ENCODE measurements at regions of chr2 and their contacts with region 1.

Region 1: GRCh38 chr2:148989882-148990493 is 48.5 kb upstream of the LYPD6B start:
- DNase-seq: peak in 8 of 9 experiments; percentile 4 to 75 (median 44)
- ATAC-seq: peak; percentile 95
- H3K4me3 ChIP-seq: no peak overlapping the region
- H3K4me3 Mint-ChIP-seq: no peak overlapping the region
- H3K27ac ChIP-seq: no peak overlapping the region
- H3K27ac Mint-ChIP-seq: no peak overlapping the region
- H3K4me1 ChIP-seq: no peaks in the 10 kb centered on the region
- H3K4me1 Mint-ChIP-seq: peaks cover 4% of the 10 kb centered on the region
- H3K27me3 ChIP-seq: no peaks in the 10 kb centered on the region
- H3K27me3 Mint-ChIP-seq: no peaks in the 10 kb centered on the region
- CTCF ChIP-seq: peak; percentile 78

Region 2: GRCh38 chr2:147937744-147938349 is 1052.1 kb before region 1 on chr2:
- CTCF ChIA-PET with region 1: interaction called, 6 read pairs
- POLR2A ChIA-PET with region 1: no interaction called
- intact Hi-C with region 1: loop called (anchors 1 kb)
- DNase-seq: peak in 2 of 9 experiments; percentile 36 to 52
- ATAC-seq: peak; percentile 40
- H3K4me3 ChIP-seq: no peak overlapping the region
- H3K4me3 Mint-ChIP-seq: no peak overlapping the region
- H3K27ac ChIP-seq: no peak overlapping the region
- H3K27ac Mint-ChIP-seq: peak overlapping the region; percentile 32
- H3K4me1 ChIP-seq: no peaks in the 10 kb centered on the region
- H3K4me1 Mint-ChIP-seq: no peaks in the 10 kb centered on the region
- H3K27me3 ChIP-seq: no peaks in the 10 kb centered on the region
- H3K27me3 Mint-ChIP-seq: no peaks in the 10 kb centered on the region
- CTCF ChIP-seq: peak; percentile 97

Region 3: GRCh38 chr2:147989809-147990403 is 1000.1 kb before region 1 on chr2:
- CTCF ChIA-PET with region 1: interaction called, 9 read pairs
- POLR2A ChIA-PET with region 1: no interaction called
- intact Hi-C with region 1: loop called (anchors 1 kb)
- DNase-seq: peak in 4 of 9 experiments; percentile 29 to 70 (median 45)
- ATAC-seq: peak; percentile 92
- H3K4me3 ChIP-seq: no peak overlapping the region
- H3K4me3 Mint-ChIP-seq: no peak overlapping the region
- H3K27ac ChIP-seq: no peak overlapping the region
- H3K27ac Mint-ChIP-seq: peak overlapping the region; percentile 11
- H3K4me1 ChIP-seq: no peaks in the 10 kb centered on the region
- H3K4me1 Mint-ChIP-seq: peaks cover 26% of the 10 kb centered on the region
- H3K27me3 ChIP-seq: no peaks in the 10 kb centered on the region
- H3K27me3 Mint-ChIP-seq: no peaks in the 10 kb centered on the region
- CTCF ChIP-seq: peak; percentile 99

Region 4: DNA sequence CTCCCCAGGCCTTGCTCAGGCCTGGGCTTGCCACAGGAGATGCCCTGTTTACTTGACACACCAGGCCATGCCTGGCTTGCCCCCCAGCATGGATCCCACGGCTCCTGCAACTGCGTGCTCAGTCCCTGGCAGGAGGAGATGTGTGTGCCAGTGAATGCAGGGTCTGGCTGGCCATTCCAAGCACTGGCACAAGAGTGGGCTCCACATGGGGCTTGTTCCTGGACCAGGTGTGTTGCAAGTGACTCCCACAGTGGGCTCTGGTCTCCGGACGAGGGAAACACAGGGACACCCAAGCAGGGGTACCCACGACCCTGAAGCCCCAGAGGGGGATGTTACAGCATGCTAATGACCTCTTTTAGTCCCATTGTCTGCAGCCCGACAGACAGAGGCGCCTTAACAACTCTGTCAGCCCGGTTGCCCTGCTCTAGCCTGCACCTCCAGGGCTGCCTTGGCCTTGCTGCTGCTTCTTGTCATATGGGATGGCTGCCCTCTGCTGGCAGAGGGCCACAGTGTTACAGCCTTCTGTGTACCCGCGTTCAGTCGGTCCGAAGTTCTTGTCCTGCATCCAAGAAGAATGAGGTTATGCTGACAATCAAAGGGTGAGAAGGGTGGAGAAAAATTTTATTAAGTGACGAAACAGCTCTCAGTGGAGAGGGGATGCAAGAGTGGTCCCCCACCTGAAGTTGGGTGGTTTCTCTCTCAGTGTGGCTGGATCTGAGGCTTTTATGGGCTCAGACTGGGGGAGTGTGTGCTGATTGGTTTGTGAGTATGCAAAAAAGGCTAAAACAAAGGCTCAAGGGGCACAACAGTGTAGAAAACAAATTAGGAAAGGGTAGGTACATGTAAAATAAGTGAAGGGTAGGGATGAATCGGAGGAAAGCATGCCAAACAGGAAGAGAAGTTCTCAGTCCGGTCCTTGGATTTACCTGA is 788.6 kb before region 1 on chr2:
- CTCF ChIA-PET with region 1: no interaction called
- POLR2A ChIA-PET with region 1: no interaction called
- intact Hi-C with region 1: loop called in 1 of 2 experiments (anchors 10 kb)
- DNase-seq: peak in 7 of 9 experiments; percentile 2 to 58 (median 26)
- ATAC-seq: no peak
- H3K4me3 ChIP-seq: no peak overlapping the region
- H3K4me3 Mint-ChIP-seq: no peak overlapping the region
- H3K27ac ChIP-seq: no peak overlapping the region
- H3K27ac Mint-ChIP-seq: no peak overlapping the region
- H3K4me1 ChIP-seq: no peaks in the 10 kb centered on the region
- H3K4me1 Mint-ChIP-seq: peaks cover 4% of the 10 kb centered on the region
- H3K27me3 ChIP-seq: no peaks in the 10 kb centered on the region
- H3K27me3 Mint-ChIP-seq: no peaks in the 10 kb centered on the region
- CTCF ChIP-seq: peak; percentile 23

Region 5: GRCh38 chr2:148565272-148565894 is 424.6 kb before region 1 on chr2:
- CTCF ChIA-PET with region 1: no interaction called
- POLR2A ChIA-PET with region 1: no interaction called
- intact Hi-C with region 1: loop called in 1 of 2 experiments (anchors 5 kb)
- DNase-seq: no peak
- ATAC-seq: no peak
- H3K4me3 ChIP-seq: no peak overlapping the region
- H3K4me3 Mint-ChIP-seq: no peak overlapping the region
- H3K27ac ChIP-seq: no peak overlapping the region
- H3K27ac Mint-ChIP-seq: no peak overlapping the region
- H3K4me1 ChIP-seq: peaks cover 8% of the 10 kb centered on the region
- H3K4me1 Mint-ChIP-seq: peaks cover 14% of the 10 kb centered on the region
- H3K27me3 ChIP-seq: no peaks in the 10 kb centered on the region
- H3K27me3 Mint-ChIP-seq: no peaks in the 10 kb centered on the region
- CTCF ChIP-seq: no peak

Region 6: DNA sequence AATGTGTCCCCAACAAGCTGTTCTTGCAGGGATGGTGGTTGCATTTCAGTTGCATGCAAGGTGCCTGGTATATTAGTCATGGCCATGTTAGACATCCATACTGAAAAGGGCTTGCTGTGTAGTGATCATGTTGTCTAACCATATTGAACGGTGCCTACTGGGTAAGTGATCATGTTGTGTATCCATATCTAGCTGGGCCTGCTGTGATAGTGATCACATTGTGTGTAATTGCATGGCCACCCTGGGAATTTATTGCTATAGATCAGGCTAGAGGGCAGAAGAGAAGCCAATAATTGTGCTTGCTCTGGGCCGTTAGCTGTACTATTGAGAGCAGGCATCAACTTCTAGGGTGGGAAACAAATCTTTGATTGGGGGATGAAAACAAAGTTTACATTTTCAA is 355.2 kb before region 1 on chr2:
- CTCF ChIA-PET with region 1: no interaction called
- POLR2A ChIA-PET with region 1: no interaction called
- intact Hi-C with region 1: loop called in 1 of 2 experiments (anchors 10 kb)
- DNase-seq: no peak
- ATAC-seq: no peak
- H3K4me3 ChIP-seq: no peak overlapping the region
- H3K4me3 Mint-ChIP-seq: no peak overlapping the region
- H3K27ac ChIP-seq: no peak overlapping the region
- H3K27ac Mint-ChIP-seq: no peak overlapping the region
- H3K4me1 ChIP-seq: no peaks in the 10 kb centered on the region
- H3K4me1 Mint-ChIP-seq: no peaks in the 10 kb centered on the region
- H3K27me3 ChIP-seq: no peaks in the 10 kb centered on the region
- H3K27me3 Mint-ChIP-seq: no peaks in the 10 kb centered on the region
- CTCF ChIP-seq: no peak

Region 7: DNA sequence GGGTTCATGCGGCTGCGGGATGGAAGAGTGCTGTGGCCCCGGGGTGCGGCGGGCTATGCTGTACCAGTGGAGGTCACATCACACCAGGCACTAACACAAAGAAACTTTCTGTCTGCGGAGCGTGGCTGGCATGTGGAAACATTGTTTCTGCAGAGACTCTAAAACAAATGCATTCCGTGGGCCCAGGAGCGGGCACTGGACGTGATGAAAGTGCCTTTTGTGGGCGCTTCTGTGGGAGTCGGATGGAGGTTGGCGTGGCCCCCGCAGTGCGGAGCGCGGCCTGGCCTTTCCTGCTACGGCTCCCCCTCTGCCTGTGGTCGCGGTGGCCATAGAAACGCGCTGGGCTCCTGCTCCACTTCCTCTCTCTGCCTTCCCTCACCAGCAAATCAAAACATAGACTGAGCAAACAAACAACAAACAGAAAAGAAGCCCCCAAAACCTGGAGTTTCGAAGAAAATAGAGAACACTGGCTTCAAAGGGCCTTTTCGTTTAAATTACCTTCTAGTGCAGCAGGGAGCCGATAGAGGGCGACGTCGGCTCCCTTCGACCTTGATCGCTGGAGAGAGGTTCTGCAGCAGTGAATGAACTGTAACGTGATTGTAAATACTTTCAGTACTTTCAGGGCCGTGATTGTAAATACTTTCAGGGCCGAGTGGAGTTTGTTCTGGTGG is 63.6 kb before region 1 on chr2:
- CTCF ChIA-PET with region 1: no interaction called
- POLR2A ChIA-PET with region 1: interaction called, 4 read pairs
- intact Hi-C with region 1: loop called in 1 of 2 experiments (anchors 2 kb)
- DNase-seq: peak; percentile 13 to 71 (median 53)
- ATAC-seq: peak; percentile 87
- H3K4me3 ChIP-seq: peak overlapping the region; percentile 34 to 48
- H3K4me3 Mint-ChIP-seq: peak overlapping the region; percentile 75
- H3K27ac ChIP-seq: no peak overlapping the region
- H3K27ac Mint-ChIP-seq: peak overlapping the region; percentile 78
- H3K4me1 ChIP-seq: peaks cover 17% of the 10 kb centered on the region
- H3K4me1 Mint-ChIP-seq: peaks cover 12% of the 10 kb centered on the region
- H3K27me3 ChIP-seq: no peaks in the 10 kb centered on the region
- H3K27me3 Mint-ChIP-seq: no peaks in the 10 kb centered on the region
- CTCF ChIP-seq: peak; percentile 57

Region 8: DNA sequence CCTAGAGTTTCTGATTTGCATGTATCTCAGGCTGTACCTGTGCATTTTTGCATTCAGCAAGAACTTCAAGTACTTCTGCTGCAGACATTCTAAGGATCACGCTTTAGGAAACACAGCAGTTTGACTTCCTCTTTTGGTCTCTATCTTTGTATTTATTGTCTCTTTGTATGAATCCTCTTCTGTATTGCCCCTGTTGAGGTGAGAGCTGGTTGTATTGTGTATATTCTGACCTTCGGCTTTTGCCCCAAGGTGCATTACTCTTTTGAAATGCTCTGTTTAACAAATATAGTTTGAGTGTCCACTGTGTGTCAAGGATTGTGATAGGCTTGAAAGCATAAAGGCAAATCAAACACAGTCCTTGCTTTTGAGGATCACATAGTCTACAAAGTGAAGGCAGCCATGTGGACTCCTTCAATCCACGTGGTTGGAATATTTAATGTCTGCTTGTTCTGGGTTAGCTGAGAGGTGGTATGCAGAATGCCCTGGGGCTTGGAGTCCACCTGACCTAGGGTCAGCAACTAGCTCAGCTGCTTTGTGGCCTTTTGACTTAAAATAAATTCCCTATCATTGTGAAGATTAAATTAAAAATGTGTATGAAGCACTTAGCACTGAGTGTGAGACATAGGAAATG is 448.5 kb after region 1 on chr2:
- CTCF ChIA-PET with region 1: no interaction called
- POLR2A ChIA-PET with region 1: no interaction called
- intact Hi-C with region 1: no loop called
- DNase-seq: no peak
- ATAC-seq: no peak
- H3K4me3 ChIP-seq: no peak overlapping the region
- H3K4me3 Mint-ChIP-seq: no peak overlapping the region
- H3K27ac ChIP-seq: no peak overlapping the region
- H3K27ac Mint-ChIP-seq: no peak overlapping the region
- H3K4me1 ChIP-seq: no peaks in the 10 kb centered on the region
- H3K4me1 Mint-ChIP-seq: no peaks in the 10 kb centered on the region
- H3K27me3 ChIP-seq: no peaks in the 10 kb centered on the region
- H3K27me3 Mint-ChIP-seq: no peaks in the 10 kb centered on the region
- CTCF ChIP-seq: no peak